Heart right ventricle (tissue), 16 donors: ENCODE measurements at regions of chr12 and their contacts with region 1.

Region 1: DNA sequence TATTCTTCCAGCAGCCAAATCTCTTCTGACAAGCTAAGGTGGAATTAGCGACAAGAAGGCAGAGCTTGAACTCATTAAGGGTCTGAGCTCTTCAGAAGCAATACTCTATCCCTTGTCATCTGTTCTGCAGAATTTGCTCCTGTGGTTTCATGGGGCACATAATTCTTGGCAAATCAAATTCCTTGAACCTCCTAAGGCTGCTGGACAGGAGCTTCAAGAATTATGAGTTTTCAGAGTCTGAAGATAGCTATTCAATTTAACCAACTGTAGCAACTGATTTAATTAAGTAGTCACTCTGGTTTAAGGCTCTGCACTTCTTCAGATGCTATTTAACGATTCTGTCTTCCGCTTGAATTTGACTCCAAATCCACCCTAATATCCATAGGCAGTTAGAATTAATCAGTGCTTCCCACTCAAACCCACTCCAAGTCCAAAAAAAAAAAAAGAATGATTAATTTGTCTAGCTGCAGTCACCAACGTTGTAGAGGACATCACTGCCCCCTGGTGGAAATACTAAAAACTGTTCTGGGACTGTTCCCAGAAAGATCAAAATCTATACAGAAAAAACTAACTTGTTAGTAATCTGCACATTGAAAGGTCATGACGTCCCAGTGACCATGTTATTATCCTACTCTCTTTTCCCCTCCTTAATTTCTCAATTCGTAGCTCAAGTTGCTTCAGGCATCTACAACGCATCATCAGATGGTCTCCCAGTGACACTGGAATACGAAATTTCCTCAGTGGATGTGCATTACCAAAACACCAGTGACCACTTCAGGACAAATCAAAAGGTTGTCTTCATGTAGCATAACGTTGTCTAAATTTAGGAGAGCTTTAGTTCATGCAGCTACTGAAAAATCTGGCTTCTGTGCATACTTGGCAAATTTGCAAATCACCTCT is 169.8 kb downstream of the KIF21A start:
- DNase-seq: peak in 1 of 2 donors; percentile 12
- ATAC-seq: no peak
- H3K4me3 ChIP-seq: no peak overlapping the region
- H3K27ac ChIP-seq: no peak overlapping the region
- H3K4me1 ChIP-seq: no peaks in the 10 kb centered on the region
- H3K27me3 ChIP-seq: no peaks in the 10 kb centered on the region
- CTCF ChIP-seq: peak; percentile 37 to 81 (median 67)

Region 2: GRCh38 chr12:38324896-38325295 is 948.2 kb before region 1 on chr12:
- intact Hi-C with region 1: loop called in 4 of 10 experiments (anchors 2 to 5 kb)
- DNase-seq: no peak
- ATAC-seq: no peak
- H3K4me3 ChIP-seq: no peak overlapping the region
- H3K27ac ChIP-seq: no peak overlapping the region
- H3K4me1 ChIP-seq: peaks cover 0 to 4% (median 0%) of the 10 kb centered on the region in 9 donors
- H3K27me3 ChIP-seq: no peaks in the 10 kb centered on the region
- CTCF ChIP-seq: no peak

Region 3: GRCh38 chr12:38332814-38333213 is 940.3 kb before region 1 on chr12:
- intact Hi-C with region 1: loop called in 4 of 10 experiments (anchors 2 to 5 kb)
- DNase-seq: no peak
- ATAC-seq: no peak
- H3K4me3 ChIP-seq: no peak overlapping the region
- H3K27ac ChIP-seq: no peak overlapping the region
- H3K4me1 ChIP-seq: peaks cover 0 to 4% (median 0%) of the 10 kb centered on the region in 9 donors
- H3K27me3 ChIP-seq: no peaks in the 10 kb centered on the region
- CTCF ChIP-seq: no peak

Region 4: GRCh38 chr12:38921025-38921677 is 352.0 kb before region 1 on chr12:
- intact Hi-C with region 1: loop called in 4 of 10 experiments (anchors 5 to 10 kb)
- DNase-seq: peak in 1 of 2 donors; percentile 29
- ATAC-seq: peak in 3 of 8 donors; percentile 38 to 78 (median 42)
- H3K4me3 ChIP-seq: no peak overlapping the region
- H3K27ac ChIP-seq: no peak overlapping the region
- H3K4me1 ChIP-seq: no peaks in the 10 kb centered on the region
- H3K27me3 ChIP-seq: no peaks in the 10 kb centered on the region
- CTCF ChIP-seq: peak; percentile 32 to 69 (median 60)

Region 5: GRCh38 chr12:39145175-39145999 is 127.7 kb before region 1 on chr12:
- intact Hi-C with region 1: loop called in 5 of 10 experiments (anchors 2 to 10 kb)
- DNase-seq: peak; percentile 21 to 60
- ATAC-seq: peak in 6 of 8 donors; percentile 61 to 98 (median 82)
- H3K4me3 ChIP-seq: peak overlapping the region; percentile 18 to 61 (median 54)
- H3K27ac ChIP-seq: no peak overlapping the region
- H3K4me1 ChIP-seq: peaks cover 0 to 10% (median 7%) of the 10 kb centered on the region in 9 donors
- H3K27me3 ChIP-seq: peaks cover 6 to 40% (median 27%) of the 10 kb centered on the region in 7 donors
- CTCF ChIP-seq: peak in 7 of 9 donors; percentile 27 to 75 (median 68)